PC-9 (cell line): ENCODE measurements at regions of chr2 and their contacts with region 1.

Region 1: DNA sequence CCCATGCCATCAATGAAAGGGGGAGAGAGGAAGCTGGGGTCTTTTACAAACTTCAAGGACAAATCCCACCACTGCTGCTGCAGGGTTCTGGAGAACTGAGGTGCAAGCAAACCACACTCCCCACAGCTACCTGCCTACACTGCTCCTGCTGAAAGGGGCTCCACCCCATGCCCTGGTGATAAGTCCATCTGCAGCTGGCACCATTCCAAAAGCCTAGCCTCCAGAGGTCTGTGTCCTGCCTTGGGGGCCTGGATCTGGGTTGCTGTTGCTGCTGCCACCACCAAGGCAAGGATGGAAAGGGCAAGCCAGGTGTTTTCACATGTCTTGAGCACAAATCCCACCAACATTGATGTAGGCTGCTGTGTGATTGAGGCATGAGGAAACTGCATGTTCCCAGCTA is 97.4 kb upstream of the UBE2E3 start:
- DNase-seq: no peak
- H3K4me3 ChIP-seq: no peak overlapping the region
- H3K27ac ChIP-seq: no peak overlapping the region
- H3K4me1 ChIP-seq: no peaks in the 10 kb centered on the region
- H3K27me3 ChIP-seq: no peaks in the 10 kb centered on the region
- CTCF ChIP-seq: no peak

Region 2: GRCh38 chr2:178891265-178891958 is 1991.5 kb before region 1 on chr2:
- CTCF ChIA-PET with region 1: no interaction called
- POLR2A ChIA-PET with region 1: no interaction called
- intact Hi-C with region 1: no loop called
- DNase-seq: peak; percentile 61 to 67
- H3K4me3 ChIP-seq: no peak overlapping the region
- H3K27ac ChIP-seq: no peak overlapping the region
- H3K4me1 ChIP-seq: no peaks in the 10 kb centered on the region
- H3K27me3 ChIP-seq: no peaks in the 10 kb centered on the region
- CTCF ChIP-seq: peak; percentile 100

Region 3: DNA sequence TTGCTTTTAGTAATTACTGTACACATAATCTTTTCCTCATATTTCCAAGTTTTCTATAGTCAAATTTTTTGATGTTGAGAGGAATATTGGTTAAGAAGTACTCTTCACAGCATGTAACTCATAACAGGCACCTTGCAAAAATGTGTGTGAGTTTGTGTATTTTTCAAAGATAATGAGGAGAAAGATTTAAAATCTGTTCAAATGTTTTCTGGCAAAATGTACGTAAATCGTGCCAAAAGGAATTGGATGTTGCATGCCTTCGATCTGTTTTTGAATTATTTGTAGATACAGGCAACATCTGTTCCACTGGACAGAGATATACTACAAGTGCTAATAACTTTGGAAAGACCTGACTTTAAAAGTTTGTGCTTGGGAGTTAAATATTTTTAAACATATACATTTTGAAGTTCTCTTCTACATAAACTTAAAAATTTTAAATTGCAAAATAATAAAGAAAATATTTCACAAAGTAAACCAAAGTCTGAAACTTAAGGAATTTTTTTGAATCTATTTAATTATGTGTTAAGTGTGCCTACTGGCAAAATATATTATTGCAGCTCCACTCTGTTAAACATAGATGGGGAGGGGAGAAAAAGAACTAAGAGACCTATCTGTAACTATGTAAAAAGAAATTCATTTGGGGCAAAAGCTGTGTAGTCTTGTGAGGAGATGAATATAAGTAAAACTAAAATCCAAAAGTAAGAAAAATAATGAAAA is 36.0 kb before region 1 on chr2:
- CTCF ChIA-PET with region 1: no interaction called
- POLR2A ChIA-PET with region 1: no interaction called
- intact Hi-C with region 1: no loop called
- DNase-seq: no peak
- H3K4me3 ChIP-seq: no peak overlapping the region
- H3K27ac ChIP-seq: no peak overlapping the region
- H3K4me1 ChIP-seq: no peaks in the 10 kb centered on the region
- H3K27me3 ChIP-seq: no peaks in the 10 kb centered on the region
- CTCF ChIP-seq: peak; percentile 50; the same call in 1 of the 2 replicates

Region 4: GRCh38 chr2:180970016-180970415 is 87.1 kb after region 1 on chr2:
- CTCF ChIA-PET with region 1: interaction called, 15 read pairs
- POLR2A ChIA-PET with region 1: no interaction called
- intact Hi-C with region 1: no loop called
- DNase-seq: no peak
- H3K4me3 ChIP-seq: no peak overlapping the region
- H3K27ac ChIP-seq: no peak overlapping the region
- H3K4me1 ChIP-seq: no peaks in the 10 kb centered on the region
- H3K27me3 ChIP-seq: no peaks in the 10 kb centered on the region
- CTCF ChIP-seq: no peak